CD4-positive, alpha-beta T cell (primary cell): ENCODE measurements at regions of chr3 and their contacts with region 1.

Region 1: GRCh38 chr3:49802719-49803464 is at the start of gene INKA1:
- DNase-seq: peak; percentile 82 to 95 (median 84)
- ATAC-seq: peak; percentile 88
- H3K4me3 ChIP-seq: peak within 1 kb of the TSS; percentile 85
- H3K4me3 Mint-ChIP-seq: peak within 1 kb of the TSS; percentile 90
- H3K27ac ChIP-seq: peak within 1 kb of the TSS; percentile 69 to 74
- H3K27ac Mint-ChIP-seq: peak within 1 kb of the TSS; percentile 80
- H3K4me1 ChIP-seq: peaks cover 51% of the 10 kb centered on the region
- H3K4me1 Mint-ChIP-seq: peaks cover 45% of the 10 kb centered on the region
- H3K27me3 ChIP-seq: no peaks in the 10 kb centered on the region
- H3K27me3 Mint-ChIP-seq: peaks cover 4% of the 10 kb centered on the region
- CTCF ChIP-seq: peak; percentile 87
- total RNA-seq, gene INKA1: 0.85 to 0.87 TPM

Region 2: DNA sequence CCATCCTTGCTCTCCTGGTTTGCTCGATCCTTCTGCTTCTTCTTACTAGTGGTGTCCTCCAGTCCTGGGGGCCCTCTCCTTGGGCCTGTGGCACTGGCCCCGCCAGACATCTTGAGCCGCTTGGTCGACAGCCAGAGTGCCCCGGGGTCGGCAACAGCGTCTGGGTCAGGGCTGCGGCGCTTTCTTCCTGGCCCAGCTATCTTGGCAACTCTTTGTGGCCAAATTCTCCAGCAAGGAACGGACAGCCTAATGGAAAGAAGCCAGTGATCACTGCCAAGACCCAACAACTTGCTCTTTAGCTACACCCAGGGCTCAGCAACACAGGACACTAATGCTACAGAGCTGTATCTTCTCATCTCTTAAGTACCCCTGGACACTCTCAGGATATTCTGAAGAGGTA is 683.9 kb before region 1 on chr3:
- CTCF ChIA-PET with region 1: no interaction called
- POLR2A ChIA-PET with region 1: no interaction called
- intact Hi-C with region 1: no loop called
- DNase-seq: no peak
- ATAC-seq: no peak
- H3K4me3 ChIP-seq: no peak overlapping the region
- H3K4me3 Mint-ChIP-seq: peak overlapping the region; percentile 93
- H3K27ac ChIP-seq: no peak overlapping the region
- H3K27ac Mint-ChIP-seq: no peak overlapping the region
- H3K4me1 ChIP-seq: peaks cover 30% of the 10 kb centered on the region
- H3K4me1 Mint-ChIP-seq: peaks cover 23% of the 10 kb centered on the region
- H3K27me3 ChIP-seq: no peaks in the 10 kb centered on the region
- H3K27me3 Mint-ChIP-seq: no peaks in the 10 kb centered on the region
- CTCF ChIP-seq: no peak

Region 3: GRCh38 chr3:49445381-49445780 is 357.5 kb before region 1 on chr3:
- CTCF ChIA-PET with region 1: no interaction called
- POLR2A ChIA-PET with region 1: no interaction called
- intact Hi-C with region 1: no loop called
- DNase-seq: no peak
- ATAC-seq: no peak
- H3K4me3 ChIP-seq: no peak overlapping the region
- H3K4me3 Mint-ChIP-seq: no peak overlapping the region
- H3K27ac ChIP-seq: no peak overlapping the region
- H3K27ac Mint-ChIP-seq: no peak overlapping the region
- H3K4me1 ChIP-seq: peaks cover 21% of the 10 kb centered on the region
- H3K4me1 Mint-ChIP-seq: peaks cover 14% of the 10 kb centered on the region
- H3K27me3 ChIP-seq: no peaks in the 10 kb centered on the region
- H3K27me3 Mint-ChIP-seq: no peaks in the 10 kb centered on the region
- CTCF ChIP-seq: no peak

Region 4: DNA sequence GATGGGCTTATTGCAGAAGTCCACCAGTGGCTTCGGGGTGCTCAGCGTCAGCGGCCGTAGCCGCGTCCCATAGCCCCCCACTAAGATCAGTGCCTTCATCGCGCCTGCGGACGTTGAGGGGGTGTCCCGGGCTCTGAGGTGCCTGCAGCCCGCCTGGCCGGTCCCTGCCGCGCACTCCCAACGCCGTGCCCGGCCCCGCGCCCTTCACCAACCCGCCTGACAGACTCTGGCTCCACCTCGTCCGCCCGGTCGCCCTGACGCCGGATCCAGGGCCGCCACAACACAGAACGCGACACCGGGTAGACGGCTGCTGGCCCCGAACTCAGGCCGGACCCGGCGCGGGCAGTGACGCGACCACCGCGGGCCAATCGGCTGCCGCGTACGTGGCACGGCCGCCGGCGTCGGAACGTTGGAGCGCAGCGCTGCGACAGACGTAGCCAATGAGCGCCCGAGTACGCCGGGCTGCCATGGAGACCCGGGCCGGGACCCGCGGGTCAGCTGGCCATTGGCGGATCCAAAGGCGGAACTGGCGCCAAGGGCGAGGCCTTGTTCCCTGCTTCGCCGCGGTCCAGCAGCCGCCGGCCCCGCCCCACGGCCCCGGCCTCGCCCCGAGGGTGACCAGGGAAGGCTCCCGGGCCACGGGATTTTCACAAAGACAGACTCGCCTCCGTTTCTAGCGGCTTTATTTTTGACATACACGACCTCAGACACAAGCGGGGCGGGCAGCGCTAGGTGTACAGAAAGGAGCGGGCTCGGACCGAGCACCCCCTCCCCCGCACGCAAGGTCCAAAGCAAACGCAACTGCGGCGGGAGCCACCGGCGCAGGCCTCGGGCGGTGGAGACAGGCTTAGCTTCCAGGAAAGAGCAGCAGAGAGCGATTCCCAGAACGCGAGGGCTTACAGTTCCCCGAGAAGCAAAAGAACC is 79.0 kb before region 1 on chr3 and contains the start of gene GMPPB:
- CTCF ChIA-PET with region 1: interaction called, 7 read pairs
- POLR2A ChIA-PET with region 1: interaction called, 15 read pairs
- intact Hi-C with region 1: no loop called
- DNase-seq: peak; percentile 81 to 96 (median 88)
- ATAC-seq: peak; percentile 70
- H3K4me3 ChIP-seq: peak within 1 kb of the TSS; percentile 99
- H3K4me3 Mint-ChIP-seq: peak within 1 kb of the TSS; percentile 98
- H3K27ac ChIP-seq: peak within 1 kb of the TSS; percentile 96 to 97
- H3K27ac Mint-ChIP-seq: peak within 1 kb of the TSS; percentile 93
- H3K4me1 ChIP-seq: peaks cover 37% of the 10 kb centered on the region
- H3K4me1 Mint-ChIP-seq: peaks cover 44% of the 10 kb centered on the region
- H3K27me3 ChIP-seq: no peaks in the 10 kb centered on the region
- H3K27me3 Mint-ChIP-seq: no peaks in the 10 kb centered on the region
- CTCF ChIP-seq: no peak
- total RNA-seq, gene GMPPB: 39.0 to 41.4 TPM

Region 5: GRCh38 chr3:49786241-49786958 is 16.5 kb before region 1 on chr3 and contains the start of gene IP6K1:
- CTCF ChIA-PET with region 1: interaction called, 7 read pairs
- POLR2A ChIA-PET with region 1: interaction called, 17 read pairs
- intact Hi-C with region 1: loop called (anchors 1 to 2 kb)
- DNase-seq: peak; percentile 97 to 100 (median 99)
- ATAC-seq: peak; percentile 99
- H3K4me3 ChIP-seq: peak within 1 kb of the TSS; percentile 97
- H3K4me3 Mint-ChIP-seq: peak within 1 kb of the TSS; percentile 94
- H3K27ac ChIP-seq: peak within 1 kb of the TSS; percentile 88 to 94
- H3K27ac Mint-ChIP-seq: peak within 1 kb of the TSS; percentile 100
- H3K4me1 ChIP-seq: peaks cover 58% of the 10 kb centered on the region
- H3K4me1 Mint-ChIP-seq: peaks cover 36% of the 10 kb centered on the region
- H3K27me3 ChIP-seq: no peaks in the 10 kb centered on the region
- H3K27me3 Mint-ChIP-seq: no peaks in the 10 kb centered on the region
- CTCF ChIP-seq: no peak
- total RNA-seq, gene IP6K1: 33.3 to 36.0 TPM

Region 6: GRCh38 chr3:49839193-49839809 is 36.4 kb after region 1 on chr3:
- CTCF ChIA-PET with region 1: interaction called, 103 read pairs
- POLR2A ChIA-PET with region 1: interaction called, 62 read pairs
- intact Hi-C with region 1: loop called (anchors 1 kb)
- DNase-seq: peak; percentile 73 to 91 (median 79)
- ATAC-seq: peak; percentile 99
- H3K4me3 ChIP-seq: no peak overlapping the region
- H3K4me3 Mint-ChIP-seq: no peak overlapping the region
- H3K27ac ChIP-seq: no peak overlapping the region
- H3K27ac Mint-ChIP-seq: no peak overlapping the region
- H3K4me1 ChIP-seq: peaks cover 3% of the 10 kb centered on the region
- H3K4me1 Mint-ChIP-seq: no peaks in the 10 kb centered on the region
- H3K27me3 ChIP-seq: no peaks in the 10 kb centered on the region
- H3K27me3 Mint-ChIP-seq: no peaks in the 10 kb centered on the region
- CTCF ChIP-seq: peak; percentile 84

Region 7: GRCh38 chr3:49929331-49930240 is 126.7 kb after region 1 on chr3 and contains the start of gene MON1A:
- CTCF ChIA-PET with region 1: interaction called, 4 read pairs
- POLR2A ChIA-PET with region 1: interaction called, 3 read pairs
- intact Hi-C with region 1: loop called in 1 of 2 experiments (anchors 5 kb)
- DNase-seq: peak; percentile 67 to 91 (median 83)
- ATAC-seq: peak; percentile 92
- H3K4me3 ChIP-seq: peak within 1 kb of the TSS; percentile 75
- H3K4me3 Mint-ChIP-seq: peak within 1 kb of the TSS; percentile 85
- H3K27ac ChIP-seq: peak within 1 kb of the TSS; percentile 74 to 78
- H3K27ac Mint-ChIP-seq: peak within 1 kb of the TSS; percentile 86
- H3K4me1 ChIP-seq: peaks cover 20% of the 10 kb centered on the region
- H3K4me1 Mint-ChIP-seq: peaks cover 38% of the 10 kb centered on the region
- H3K27me3 ChIP-seq: no peaks in the 10 kb centered on the region
- H3K27me3 Mint-ChIP-seq: no peaks in the 10 kb centered on the region
- CTCF ChIP-seq: no peak
- total RNA-seq, gene MON1A: 0.85 to 1.3 TPM

Region 8: GRCh38 chr3:50008931-50009330 is 206.0 kb after region 1 on chr3:
- CTCF ChIA-PET with region 1: no interaction called
- POLR2A ChIA-PET with region 1: no interaction called
- intact Hi-C with region 1: no loop called
- DNase-seq: no peak
- ATAC-seq: no peak
- H3K4me3 ChIP-seq: no peak overlapping the region
- H3K4me3 Mint-ChIP-seq: no peak overlapping the region
- H3K27ac ChIP-seq: no peak overlapping the region
- H3K27ac Mint-ChIP-seq: no peak overlapping the region
- H3K4me1 ChIP-seq: no peaks in the 10 kb centered on the region
- H3K4me1 Mint-ChIP-seq: no peaks in the 10 kb centered on the region
- H3K27me3 ChIP-seq: no peaks in the 10 kb centered on the region
- H3K27me3 Mint-ChIP-seq: no peaks in the 10 kb centered on the region
- CTCF ChIP-seq: no peak

Region 9: DNA sequence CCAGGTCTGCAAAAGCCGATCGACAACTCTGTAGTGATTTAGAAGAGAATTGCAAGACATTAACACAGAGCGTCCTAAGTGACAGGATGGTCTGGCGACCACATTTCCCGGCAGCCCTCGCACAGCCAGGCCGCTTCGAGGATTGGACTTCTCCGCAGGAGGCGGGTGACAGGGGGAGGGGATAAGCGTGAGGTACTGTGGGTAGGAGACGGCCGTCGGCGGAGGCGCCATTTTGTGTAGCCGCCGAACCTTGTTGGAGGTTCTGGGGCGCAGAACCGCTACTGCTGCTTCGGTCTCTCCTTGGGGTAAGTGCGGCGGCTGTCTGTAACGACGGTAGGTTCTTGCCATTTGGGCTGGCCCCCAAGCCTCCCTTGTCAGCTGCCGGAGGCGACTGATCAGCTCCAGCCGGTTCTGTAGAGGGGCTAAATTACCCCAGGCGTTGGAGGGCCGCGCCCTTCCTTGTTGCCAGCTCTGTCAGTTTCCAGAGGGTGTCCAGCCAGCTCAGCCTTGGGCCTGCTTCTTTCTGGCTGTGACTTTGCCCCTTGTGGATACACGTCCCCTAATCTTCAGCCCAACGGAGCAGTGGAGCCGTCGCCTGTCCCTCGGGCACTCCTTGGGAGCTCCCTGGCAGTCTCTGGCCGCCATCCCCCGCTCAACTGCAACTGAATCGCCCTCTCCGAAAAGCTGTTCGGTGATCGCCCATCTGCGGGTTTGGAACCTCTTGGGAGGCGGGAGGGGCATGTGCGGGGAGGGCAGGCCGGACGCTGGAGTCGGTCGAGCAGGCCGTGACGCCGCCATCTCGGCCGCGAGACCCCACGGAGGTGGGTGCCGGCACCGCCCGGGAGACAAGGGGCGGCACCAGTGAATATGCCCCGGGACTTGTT is 286.1 kb after region 1 on chr3 and contains the start of gene RBM5:
- CTCF ChIA-PET with region 1: no interaction called
- POLR2A ChIA-PET with region 1: interaction called, 10 read pairs
- intact Hi-C with region 1: loop called (anchors 1 to 10 kb)
- DNase-seq: peak; percentile 83 to 95 (median 89)
- ATAC-seq: peak; percentile 99
- H3K4me3 ChIP-seq: peak within 1 kb of the TSS; percentile 73
- H3K4me3 Mint-ChIP-seq: peak within 1 kb of the TSS; percentile 97
- H3K27ac ChIP-seq: peak within 1 kb of the TSS; percentile 88 to 92
- H3K27ac Mint-ChIP-seq: peak within 1 kb of the TSS; percentile 99
- H3K4me1 ChIP-seq: peaks cover 25% of the 10 kb centered on the region
- H3K4me1 Mint-ChIP-seq: peaks cover 37% of the 10 kb centered on the region
- H3K27me3 ChIP-seq: no peaks in the 10 kb centered on the region
- H3K27me3 Mint-ChIP-seq: no peaks in the 10 kb centered on the region
- CTCF ChIP-seq: no peak
- total RNA-seq, gene RBM5: 324 to 330 TPM